Breast epithelium (tissue), 4 donors: ENCODE measurements at regions of chr3 and their contacts with region 1.

Region 1: GRCh38 chr3:12679468-12679867 is 15.6 kb upstream of the RAF1 start:
- DNase-seq: no peak
- H3K4me3 ChIP-seq: no peak overlapping the region
- H3K27ac ChIP-seq: no peak overlapping the region
- H3K4me1 ChIP-seq: no peaks in the 10 kb centered on the region
- H3K27me3 ChIP-seq: no peaks in the 10 kb centered on the region
- CTCF ChIP-seq: no peak
- POLR2A ChIP-seq: no peak

Region 2: DNA sequence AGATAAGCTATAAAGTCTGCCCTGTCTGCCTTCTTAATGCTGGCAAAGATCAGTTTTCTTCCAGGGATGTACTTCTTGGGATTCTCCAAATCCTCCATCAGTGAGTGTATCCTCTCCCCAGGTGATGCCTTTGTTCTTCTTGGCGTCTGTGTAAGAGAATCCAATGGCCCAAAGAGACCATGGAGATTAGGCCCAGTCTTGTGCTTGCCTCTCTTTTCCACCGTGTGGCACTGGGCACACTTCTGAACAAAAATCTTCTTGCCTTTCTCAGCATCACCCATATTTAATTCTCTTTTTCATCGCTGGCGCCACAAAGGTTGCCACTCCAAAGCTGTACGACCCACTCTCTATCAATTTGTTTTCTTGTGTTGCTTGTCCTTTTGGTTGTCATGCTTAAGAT is 800.6 kb before region 1 on chr3:
- intact Hi-C with region 1: loop called (anchors 5 kb)
- DNase-seq: no peak
- H3K4me3 ChIP-seq: no peak overlapping the region
- H3K27ac ChIP-seq: no peak overlapping the region
- H3K4me1 ChIP-seq: no peaks in the 10 kb centered on the region
- H3K27me3 ChIP-seq: no peaks in the 10 kb centered on the region
- CTCF ChIP-seq: no peak
- POLR2A ChIP-seq: no peak